ENCODE measurements at regions of chr6 and their contacts with region 1.

Region 1: DNA sequence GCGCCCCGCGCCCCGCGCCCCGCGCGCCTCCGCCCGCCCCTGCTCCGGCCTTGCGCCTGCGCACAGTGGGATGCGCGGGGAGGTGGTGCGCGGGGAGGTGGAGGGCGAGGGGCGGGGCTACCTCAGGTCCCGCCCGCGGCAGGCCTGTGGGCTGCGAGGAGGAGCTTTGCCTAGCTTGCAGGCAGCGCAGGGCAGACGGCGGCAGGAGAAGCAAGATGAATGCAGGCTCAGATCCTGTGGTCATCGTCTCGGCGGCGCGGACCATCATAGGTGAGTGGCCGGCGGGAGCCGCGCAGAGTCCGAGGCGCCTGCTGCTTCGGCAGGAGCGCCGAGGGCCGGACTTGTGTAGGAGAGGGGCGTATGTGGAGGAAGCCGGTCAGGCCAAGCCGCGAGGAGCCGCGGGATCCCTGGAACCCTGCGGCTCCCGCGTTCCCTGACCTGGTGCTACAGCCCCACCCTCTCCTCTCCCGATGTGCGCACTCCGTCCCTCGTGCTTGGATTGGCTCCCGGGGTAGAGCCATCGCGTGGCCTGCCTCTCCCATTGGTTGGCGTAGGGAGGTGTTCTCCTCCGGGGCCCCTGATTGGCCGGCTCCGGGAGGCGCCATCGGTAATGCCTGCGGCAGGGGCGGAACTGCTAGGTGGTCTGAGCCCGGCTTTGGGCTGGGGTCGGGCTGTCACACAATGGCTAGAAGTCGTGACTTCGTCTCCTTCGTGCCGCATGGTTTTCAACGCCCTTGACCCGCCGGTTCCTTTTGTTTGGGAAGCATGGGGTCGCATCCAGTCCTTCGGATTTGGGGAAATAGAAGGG is at the start of gene ACAT2:
- DNase-seq: peak; percentile 97 to 98
- H3K4me3 ChIP-seq: peak within 1 kb of the TSS; percentile 64 to 84
- H3K27ac ChIP-seq: peak within 1 kb of the TSS; percentile 92 to 95
- H3K4me1 ChIP-seq: peaks cover 0 to 26% (median 18%) of the 10 kb centered on the region in 4 donors
- H3K27me3 ChIP-seq: no peaks in the 10 kb centered on the region
- CTCF ChIP-seq: peak in 1 of 2 experiments; percentile 29

Region 2: DNA sequence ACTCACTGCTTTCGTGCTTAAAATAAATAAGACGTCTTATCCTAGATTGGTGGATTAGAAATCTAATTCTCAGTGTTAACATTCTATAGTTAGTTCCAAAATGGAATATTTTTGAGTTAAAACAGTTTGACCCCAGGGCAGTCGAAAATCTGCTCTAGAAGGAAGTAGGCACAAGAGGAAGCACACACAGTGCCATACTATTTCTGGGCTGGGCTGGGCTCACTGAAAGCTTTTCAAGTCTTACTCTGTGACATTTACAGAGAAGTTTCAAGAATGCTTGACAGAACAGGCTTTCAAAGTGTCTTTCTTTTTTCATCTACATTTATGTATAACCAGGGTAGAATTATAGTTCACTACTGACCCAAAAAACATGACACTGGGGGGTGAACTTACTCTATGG is 278.8 kb before region 1 on chr6:
- intact Hi-C with region 1: no loop called
- DNase-seq: no peak
- H3K4me3 ChIP-seq: no peak overlapping the region
- H3K27ac ChIP-seq: no peak overlapping the region
- H3K4me1 ChIP-seq: peaks cover 0 to 5% (median 0%) of the 10 kb centered on the region in 4 donors
- H3K27me3 ChIP-seq: no peaks in the 10 kb centered on the region
- CTCF ChIP-seq: no peak

Region 3: DNA sequence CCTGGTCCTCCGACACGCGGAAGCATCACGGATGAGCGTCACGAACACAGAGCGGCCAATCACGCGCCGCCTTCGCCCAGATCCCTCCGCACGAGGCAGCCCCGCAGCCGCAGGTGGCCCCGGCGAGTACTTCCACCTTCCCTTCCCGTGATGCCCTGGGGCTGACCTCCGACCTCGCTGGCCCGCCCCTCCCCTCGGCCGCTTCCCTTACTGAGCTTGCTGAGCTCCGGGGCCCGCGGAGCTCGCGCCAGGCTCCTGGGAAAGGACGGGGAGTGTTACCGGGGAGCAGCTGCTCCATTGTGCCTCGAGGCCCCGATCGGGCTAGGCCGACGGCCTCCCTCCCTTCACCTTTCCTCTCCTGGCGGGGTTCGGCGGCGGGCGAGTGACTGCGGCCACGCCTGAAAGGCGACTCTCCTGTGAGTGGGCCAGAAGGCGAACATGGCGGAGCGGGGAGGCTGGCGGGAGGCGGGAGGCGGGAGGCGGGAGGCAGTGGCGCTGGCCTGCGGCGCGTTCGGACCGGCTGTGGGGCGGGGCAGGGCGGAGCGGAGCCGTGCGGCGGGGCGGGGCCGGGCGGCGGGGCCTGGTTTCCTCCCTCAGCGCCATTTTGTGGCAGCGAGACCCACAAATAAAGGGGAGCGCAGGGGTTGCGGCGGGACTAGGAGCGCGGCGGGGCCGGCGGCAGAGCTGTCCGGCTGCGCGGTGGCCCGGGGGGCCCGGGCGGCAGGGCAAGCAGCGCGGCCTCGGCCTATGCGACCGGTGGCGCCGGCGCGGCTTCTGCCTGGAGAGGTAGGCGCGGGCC is 35.0 kb before region 1 on chr6 and contains the start of gene WTAP:
- intact Hi-C with region 1: loop called (anchors 5 kb)
- DNase-seq: peak; percentile 93 to 98
- H3K4me3 ChIP-seq: peak within 1 kb of the TSS; percentile 84 to 96
- H3K27ac ChIP-seq: peak within 1 kb of the TSS; percentile 99
- H3K4me1 ChIP-seq: peaks cover 0 to 42% (median 22%) of the 10 kb centered on the region in 4 donors
- H3K27me3 ChIP-seq: no peaks in the 10 kb centered on the region
- CTCF ChIP-seq: no peak

Measured in tibial artery (tissue), 4 donors.